ENCODE measurements at regions of chr15 and their contacts with region 1.

Region 1: GRCh38 chr15:57561041-57561711 is 30.5 kb upstream of the MYZAP start:
- DNase-seq: peak; percentile 68 to 83
- H3K4me3 ChIP-seq: no peak overlapping the region
- H3K27ac ChIP-seq: peak overlapping the region; percentile 96
- H3K4me1 ChIP-seq: peaks cover 11% of the 10 kb centered on the region
- H3K27me3 ChIP-seq: no peaks in the 10 kb centered on the region
- CTCF ChIP-seq: peak; percentile 91

Region 2: GRCh38 chr15:57281321-57281720 is 279.9 kb before region 1 on chr15:
- CTCF ChIA-PET with region 1: no interaction called
- POLR2A ChIA-PET with region 1: no interaction called
- intact Hi-C with region 1: no loop called
- DNase-seq: no peak
- H3K4me3 ChIP-seq: no peak overlapping the region
- H3K27ac ChIP-seq: no peak overlapping the region
- H3K4me1 ChIP-seq: no peaks in the 10 kb centered on the region
- H3K27me3 ChIP-seq: no peaks in the 10 kb centered on the region
- CTCF ChIP-seq: no peak

Region 3: GRCh38 chr15:57440799-57441198 is 120.4 kb before region 1 on chr15:
- CTCF ChIA-PET with region 1: no interaction called
- POLR2A ChIA-PET with region 1: no interaction called
- intact Hi-C with region 1: no loop called
- DNase-seq: peak in 1 of 2 experiments; percentile 47
- H3K4me3 ChIP-seq: no peak overlapping the region
- H3K27ac ChIP-seq: no peak overlapping the region
- H3K4me1 ChIP-seq: peaks cover 7% of the 10 kb centered on the region
- H3K27me3 ChIP-seq: no peaks in the 10 kb centered on the region
- CTCF ChIP-seq: no peak

Region 4: DNA sequence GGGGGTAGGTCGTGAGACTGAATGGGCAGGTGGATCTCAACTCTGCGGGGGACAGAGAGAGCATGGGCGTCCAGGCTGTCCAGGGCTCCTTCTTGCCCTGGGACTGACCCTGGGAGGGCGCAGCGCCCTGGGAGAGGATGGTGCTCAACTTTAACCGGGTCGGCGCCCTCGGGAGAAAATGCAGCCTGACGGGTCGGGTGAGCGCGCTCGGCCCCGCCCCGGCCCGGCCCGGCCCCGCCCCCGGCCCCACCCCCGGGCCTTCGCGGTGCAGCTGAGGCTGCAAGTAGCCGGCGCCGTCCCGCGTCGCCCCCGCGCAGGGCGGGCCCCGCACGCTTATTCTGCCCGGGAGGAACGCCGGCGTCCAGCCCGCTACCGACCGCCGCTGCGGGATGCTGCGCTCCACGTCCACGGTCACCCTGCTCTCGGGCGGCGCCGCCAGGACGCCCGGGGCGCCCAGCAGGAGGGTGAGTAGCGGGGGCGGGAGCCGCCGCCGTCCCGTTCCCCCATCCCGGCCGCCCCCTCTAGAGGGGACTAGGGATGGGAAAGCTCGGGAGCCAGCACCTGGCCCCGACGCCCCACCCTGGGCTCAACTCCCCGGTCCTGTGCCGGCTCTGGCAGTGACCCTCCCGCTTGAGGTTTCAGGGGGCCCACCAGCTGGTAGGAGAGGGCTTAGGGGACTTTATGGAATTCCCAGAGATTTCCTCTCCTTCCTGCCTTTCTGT is 30.6 kb after region 1 on chr15 and contains the start of gene MYZAP:
- CTCF ChIA-PET with region 1: no interaction called
- POLR2A ChIA-PET with region 1: no interaction called
- intact Hi-C with region 1: loop called (anchors 2 kb)
- DNase-seq: peak; percentile 48 to 80
- H3K4me3 ChIP-seq: peak within 1 kb of the TSS; percentile 78
- H3K27ac ChIP-seq: peak within 1 kb of the TSS; percentile 90
- H3K4me1 ChIP-seq: peaks cover 72% of the 10 kb centered on the region
- H3K27me3 ChIP-seq: no peaks in the 10 kb centered on the region
- CTCF ChIP-seq: no peak
- total RNA-seq, gene MYZAP: 3.5 and 5.9 TPM in 2 replicates

Region 5: DNA sequence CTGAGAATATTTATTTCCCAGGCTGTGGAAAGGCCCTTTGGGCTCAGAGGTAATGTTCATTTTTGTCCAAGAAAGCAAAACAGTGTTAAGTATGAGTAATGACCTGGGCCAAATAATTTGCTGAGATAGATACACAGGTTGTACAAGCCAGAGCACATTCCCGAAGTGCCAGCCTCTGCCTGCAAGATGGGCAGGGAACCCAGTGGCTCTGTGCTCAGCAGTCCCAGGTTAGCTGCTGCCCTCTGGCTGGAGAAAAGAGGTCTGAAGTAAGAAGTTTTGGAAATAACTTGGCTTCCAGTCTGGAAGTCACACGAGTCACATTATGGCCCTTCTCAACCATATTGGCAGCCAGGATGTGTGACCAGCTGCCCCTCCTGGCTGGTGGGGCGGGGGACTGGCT is 50.8 kb after region 1 on chr15:
- CTCF ChIA-PET with region 1: interaction called, 6 read pairs
- POLR2A ChIA-PET with region 1: no interaction called
- intact Hi-C with region 1: loop called (anchors 1 kb)
- DNase-seq: peak; percentile 81 to 87
- H3K4me3 ChIP-seq: no peak overlapping the region
- H3K27ac ChIP-seq: peak overlapping the region; percentile 85
- H3K4me1 ChIP-seq: peaks cover 36% of the 10 kb centered on the region
- H3K27me3 ChIP-seq: no peaks in the 10 kb centered on the region
- CTCF ChIP-seq: peak; percentile 68

Region 6: GRCh38 chr15:57706405-57707209 is 145.4 kb after region 1 on chr15 and contains the start of gene POLR2M:
- CTCF ChIA-PET with region 1: no interaction called
- POLR2A ChIA-PET with region 1: no interaction called
- intact Hi-C with region 1: loop called (anchors 2 kb)
- DNase-seq: peak; percentile 84 to 85
- H3K4me3 ChIP-seq: peak within 1 kb of the TSS; percentile 74
- H3K27ac ChIP-seq: peak within 1 kb of the TSS; percentile 74
- H3K4me1 ChIP-seq: peaks cover 15% of the 10 kb centered on the region
- H3K27me3 ChIP-seq: no peaks in the 10 kb centered on the region
- CTCF ChIP-seq: no peak
- total RNA-seq, gene POLR2M: 53.9 and 56.8 TPM in 2 replicates

Region 7: DNA sequence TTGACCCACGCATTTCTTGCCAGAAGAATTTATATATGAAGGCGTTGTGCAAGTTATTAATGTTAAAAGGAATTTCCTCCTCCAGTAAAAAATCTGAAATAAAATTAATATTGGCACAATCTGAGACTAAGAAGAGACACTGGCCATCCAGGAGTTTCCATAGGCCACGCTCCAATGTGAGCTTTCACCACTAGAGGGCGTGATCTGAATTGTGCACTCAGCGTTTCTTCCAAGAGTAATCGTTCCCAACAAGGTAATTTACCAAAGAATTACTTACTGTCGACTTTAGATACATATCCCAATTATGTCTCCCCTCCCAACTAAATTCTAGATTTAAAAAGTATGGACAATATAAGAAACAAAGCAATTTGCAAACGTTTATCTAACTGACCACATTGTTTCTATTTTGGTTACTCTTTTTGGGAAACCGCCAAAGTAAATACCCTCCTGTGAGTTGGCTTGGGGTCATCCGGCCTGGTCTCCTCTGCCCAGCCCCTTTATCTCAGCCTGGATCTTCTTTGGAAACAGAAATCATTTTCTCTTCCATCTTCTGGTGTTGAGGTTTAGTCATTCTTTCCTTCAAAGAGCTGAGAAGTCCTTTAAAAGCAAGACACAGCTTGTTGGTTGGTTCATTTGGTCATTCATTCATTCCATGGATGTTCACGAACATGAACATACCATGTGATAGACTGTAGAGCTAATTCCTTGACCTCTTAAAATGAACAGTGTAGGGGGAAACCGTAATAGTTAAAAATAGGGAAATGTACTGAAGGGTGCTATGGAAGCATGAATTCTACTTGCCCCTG is 171.6 kb after region 1 on chr15:
- CTCF ChIA-PET with region 1: no interaction called
- POLR2A ChIA-PET with region 1: no interaction called
- intact Hi-C with region 1: loop called (anchors 1 kb)
- DNase-seq: peak in 1 of 2 experiments; percentile 45
- H3K4me3 ChIP-seq: no peak overlapping the region
- H3K27ac ChIP-seq: no peak overlapping the region
- H3K4me1 ChIP-seq: no peaks in the 10 kb centered on the region
- H3K27me3 ChIP-seq: no peaks in the 10 kb centered on the region
- CTCF ChIP-seq: peak; percentile 85

Region 8: GRCh38 chr15:57861036-57861638 is 300.0 kb after region 1 on chr15:
- CTCF ChIA-PET with region 1: no interaction called
- POLR2A ChIA-PET with region 1: interaction called, 5 read pairs
- intact Hi-C with region 1: loop called (anchors 2 kb)
- DNase-seq: peak; percentile 6 to 36
- H3K4me3 ChIP-seq: no peak overlapping the region
- H3K27ac ChIP-seq: no peak overlapping the region
- H3K4me1 ChIP-seq: no peaks in the 10 kb centered on the region
- H3K27me3 ChIP-seq: no peaks in the 10 kb centered on the region
- CTCF ChIP-seq: peak; percentile 82

Measured in PC-9 (cell line).